SK-N-SH (cell line): ENCODE measurements at regions of chrX and their contacts with region 1.

Region 1: GRCh38 chrX:133792198-133792953 is 193.0 kb downstream of the GPC3 start:
- DNase-seq: peak; percentile 65
- H3K4me3 ChIP-seq: peak overlapping the region; percentile 37 to 38; a peak in 3 of 4 replicates
- H3K27ac ChIP-seq: peak overlapping the region in 1 of 2 experiments; percentile 47; a peak in 1 of 4 replicates
- H3K4me1 ChIP-seq: no peaks in the 10 kb centered on the region
- H3K27me3 ChIP-seq: peaks cover 11% of the 10 kb centered on the region
- CTCF ChIP-seq: peak; percentile 99
- EP300 ChIP-seq: no peak
- RAD21 ChIP-seq: peak; percentile 87

Region 2: GRCh38 chrX:133698298-133698697 is 94.1 kb before region 1 on chrX:
- CTCF ChIA-PET with region 1: interaction called, 17 read pairs
- POLR2A ChIA-PET with region 1: no interaction called
- DNase-seq: peak; percentile 10
- H3K4me3 ChIP-seq: no peak overlapping the region
- H3K27ac ChIP-seq: no peak overlapping the region
- H3K4me1 ChIP-seq: no peaks in the 10 kb centered on the region
- H3K27me3 ChIP-seq: no peaks in the 10 kb centered on the region; the same call in none of the 2 replicates
- CTCF ChIP-seq: peak; percentile 53
- EP300 ChIP-seq: no peak
- RAD21 ChIP-seq: peak; percentile 75

Region 3: DNA sequence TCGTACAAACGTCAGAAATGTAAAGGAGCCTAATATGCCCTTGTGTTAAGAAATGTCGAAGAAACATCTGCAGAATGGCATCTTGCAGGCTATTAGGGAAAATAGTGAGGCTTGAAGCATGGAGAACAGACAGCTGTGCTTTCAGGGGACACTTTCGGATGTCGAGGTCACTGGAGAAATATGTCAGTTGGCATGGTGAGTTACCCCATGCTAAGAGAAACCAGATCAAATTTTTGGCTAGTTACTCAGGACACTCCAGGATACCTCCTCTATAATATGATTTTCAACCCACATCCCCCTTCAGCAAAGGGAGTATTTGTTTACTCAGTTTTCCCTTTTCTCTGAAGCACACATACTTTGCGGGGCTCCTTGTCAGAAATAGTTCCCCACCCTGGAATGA is 21.6 kb after region 1 on chrX:
- CTCF ChIA-PET with region 1: interaction called, 10 read pairs
- POLR2A ChIA-PET with region 1: no interaction called
- DNase-seq: no peak
- H3K4me3 ChIP-seq: no peak overlapping the region
- H3K27ac ChIP-seq: no peak overlapping the region
- H3K4me1 ChIP-seq: no peaks in the 10 kb centered on the region
- H3K27me3 ChIP-seq: no peaks in the 10 kb centered on the region; the same call in 1 of the 2 replicates
- CTCF ChIP-seq: no peak
- EP300 ChIP-seq: no peak
- RAD21 ChIP-seq: no peak

Region 4: GRCh38 chrX:134020910-134021309 is 228.5 kb after region 1 on chrX:
- CTCF ChIA-PET with region 1: interaction called, 31 read pairs
- POLR2A ChIA-PET with region 1: no interaction called
- DNase-seq: peak; percentile 8
- H3K4me3 ChIP-seq: no peak overlapping the region
- H3K27ac ChIP-seq: no peak overlapping the region
- H3K4me1 ChIP-seq: no peaks in the 10 kb centered on the region
- H3K27me3 ChIP-seq: no peaks in the 10 kb centered on the region
- CTCF ChIP-seq: no peak
- EP300 ChIP-seq: no peak
- RAD21 ChIP-seq: peak; percentile 41

Region 5: DNA sequence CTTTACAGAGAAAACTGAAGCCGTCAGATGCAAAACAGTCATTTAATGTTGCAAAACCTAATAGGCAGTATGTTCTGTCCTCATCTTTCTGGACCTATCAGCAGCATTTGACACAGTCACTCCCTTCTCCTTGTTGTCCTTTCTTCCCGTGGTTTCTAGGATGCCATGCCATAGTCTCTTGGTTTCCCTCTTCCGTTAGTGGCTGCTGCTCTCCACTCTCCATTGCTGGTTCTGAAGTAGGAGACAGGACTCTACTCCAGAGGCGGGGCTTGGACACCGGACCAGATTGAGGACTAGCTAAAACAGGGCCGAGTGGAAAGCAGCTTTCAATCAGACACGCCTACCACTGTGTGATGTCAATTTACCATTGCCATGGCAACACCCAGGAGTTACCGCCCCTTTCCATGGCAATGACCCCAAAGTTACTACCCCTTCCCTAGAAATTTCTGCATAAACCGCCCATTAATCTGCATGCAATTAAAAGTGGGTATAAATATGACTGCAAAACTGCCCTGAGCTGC is 355.9 kb after region 1 on chrX:
- CTCF ChIA-PET with region 1: interaction called, 10 read pairs
- POLR2A ChIA-PET with region 1: no interaction called
- DNase-seq: no peak
- H3K4me3 ChIP-seq: peak overlapping the region in 1 of 2 experiments; percentile 51; a peak in 2 of 4 replicates
- H3K27ac ChIP-seq: no peak overlapping the region
- H3K4me1 ChIP-seq: no peaks in the 10 kb centered on the region
- H3K27me3 ChIP-seq: no peaks in the 10 kb centered on the region; the same call in 1 of the 2 replicates
- CTCF ChIP-seq: no peak
- EP300 ChIP-seq: no peak
- RAD21 ChIP-seq: no peak

Region 6: GRCh38 chrX:134396174-134396573 is 603.8 kb after region 1 on chrX:
- CTCF ChIA-PET with region 1: interaction called, 20 read pairs
- POLR2A ChIA-PET with region 1: no interaction called
- DNase-seq: peak; percentile 38
- H3K4me3 ChIP-seq: no peak overlapping the region
- H3K27ac ChIP-seq: peak overlapping the region in 1 of 2 experiments; percentile 58; a peak in 1 of 4 replicates
- H3K4me1 ChIP-seq: no peaks in the 10 kb centered on the region; a peak in 1 of 4 replicates
- H3K27me3 ChIP-seq: no peaks in the 10 kb centered on the region
- CTCF ChIP-seq: peak; percentile 93
- EP300 ChIP-seq: no peak
- RAD21 ChIP-seq: peak; percentile 71